WTC11 (cell line): ENCODE measurements at regions of chr9 and their contacts with region 1.

Region 1: GRCh38 chr9:137277329-137278041 is at the start of gene TOR4A:
- DNase-seq: peak; percentile 76
- ATAC-seq: peak; percentile 36
- H3K4me3 Mint-ChIP-seq: peak within 1 kb of the TSS; percentile 62
- H3K27ac Mint-ChIP-seq: peak within 1 kb of the TSS; percentile 90
- H3K4me1 Mint-ChIP-seq: peaks cover 25% of the 10 kb centered on the region
- H3K27me3 Mint-ChIP-seq: peaks cover 8% of the 10 kb centered on the region
- CTCF ChIP-seq: no peak
- total RNA-seq, gene TOR4A: 7.3 to 11.8 TPM (median 11.3 TPM) in 3 replicates

Region 2: DNA sequence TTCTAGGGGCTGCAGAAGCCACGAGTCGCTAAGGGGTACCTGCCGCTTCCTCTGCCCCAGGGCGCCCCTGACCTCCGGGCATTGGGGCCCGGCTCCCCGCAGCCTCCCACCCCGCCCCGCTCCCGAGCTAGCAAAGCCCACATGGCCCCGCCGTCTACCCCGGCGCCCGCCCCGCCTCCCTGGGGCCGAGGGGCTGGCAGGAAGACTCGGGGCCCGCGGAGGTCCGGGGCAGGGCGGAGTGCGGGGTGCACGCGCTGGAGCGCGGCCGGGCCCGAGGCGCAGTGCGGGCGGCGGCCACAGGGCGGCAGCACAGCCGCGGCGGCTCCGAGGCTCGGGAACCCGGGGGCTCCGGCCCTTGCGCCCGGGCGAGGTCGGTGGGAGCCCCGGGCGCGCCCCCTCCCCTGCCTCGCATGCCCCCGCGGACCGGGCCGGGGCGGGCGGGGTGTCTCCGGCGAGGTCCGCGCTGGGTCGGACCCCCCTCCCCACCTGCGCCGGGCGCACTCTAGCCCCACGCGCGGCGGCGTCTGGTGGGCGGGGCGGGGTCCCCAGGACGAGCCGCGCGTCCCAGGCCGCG is 17.8 kb after region 1 on chr9:
- CTCF ChIA-PET with region 1: interaction called, 13 read pairs
- POLR2A ChIA-PET with region 1: no interaction called
- DNase-seq: peak; percentile 71
- ATAC-seq: peak; percentile 53
- H3K4me3 Mint-ChIP-seq: peak overlapping the region; percentile 50
- H3K27ac Mint-ChIP-seq: no peak overlapping the region
- H3K4me1 Mint-ChIP-seq: peaks cover 47% of the 10 kb centered on the region
- H3K27me3 Mint-ChIP-seq: peaks cover 36% of the 10 kb centered on the region
- CTCF ChIP-seq: 0 out of 2 replicates have a peak, but pooled peaks have one; percentile 53

Region 3: GRCh38 chr9:137302176-137302994 is 24.9 kb after region 1 on chr9 and contains the start of gene NRARP:
- CTCF ChIA-PET with region 1: interaction called, 10 read pairs
- POLR2A ChIA-PET with region 1: interaction called, 3 read pairs
- DNase-seq: peak; percentile 84
- ATAC-seq: peak; percentile 31
- H3K4me3 Mint-ChIP-seq: peak within 1 kb of the TSS; percentile 94
- H3K27ac Mint-ChIP-seq: peak within 1 kb of the TSS; percentile 84
- H3K4me1 Mint-ChIP-seq: peaks cover 45% of the 10 kb centered on the region
- H3K27me3 Mint-ChIP-seq: peaks cover 20% of the 10 kb centered on the region
- CTCF ChIP-seq: peak; percentile 42; the same call in 1 of the 2 replicates
- total RNA-seq, gene NRARP: 46.7 to 52.4 TPM (median 51.5 TPM) in 3 replicates